K562 (cell line): ENCODE measurements at regions of chr2 and their contacts with region 1.

Region 1: GRCh38 chr2:155377266-155377680 is 678.8 kb downstream of the KCNJ3 start:
- DNase-seq: peak in 2 of 4 experiments; percentile 15 to 25
- ATAC-seq: peak; percentile 75
- H3K4me3 ChIP-seq: no peak overlapping the region
- H3K27ac ChIP-seq: no peak overlapping the region
- H3K4me1 ChIP-seq: no peaks in the 10 kb centered on the region
- H3K27me3 ChIP-seq: no peaks in the 10 kb centered on the region
- CTCF ChIP-seq: peak in 2 of 3 experiments; percentile 19 to 45; a peak in 2 of 6 replicates
- EP300 ChIP-seq: no peak
- POLR2A ChIP-seq: no peak
- RAD21 ChIP-seq: peak; percentile 58 to 76

Region 2: DNA sequence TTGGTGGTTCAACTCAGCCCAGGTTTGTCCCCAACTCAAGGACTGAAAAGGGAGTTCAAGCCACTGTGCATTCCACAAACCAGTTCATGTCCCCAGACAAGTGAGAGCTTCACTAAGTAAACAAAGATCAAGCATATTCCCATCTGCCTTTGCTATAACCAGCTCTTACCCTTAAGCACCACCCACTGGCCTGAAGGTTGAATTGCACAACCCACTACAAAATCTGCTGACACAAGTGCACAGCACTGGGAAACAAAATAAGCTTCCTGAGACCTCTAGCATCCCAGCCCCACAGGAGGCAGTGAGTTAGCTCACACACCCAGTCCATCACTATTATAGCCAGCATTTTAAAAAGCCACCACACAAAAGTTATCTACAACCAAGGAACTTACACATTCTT is 438.6 kb after region 1 on chr2:
- CTCF ChIA-PET with region 1: no interaction called
- POLR2A ChIA-PET with region 1: no interaction called
- in situ Hi-C with region 1: no loop called
- intact Hi-C with region 1: loop called (anchors 5 kb)
- DNase-seq: peak; percentile 8 to 11 (median 10)
- ATAC-seq: peak; percentile 65
- H3K4me3 ChIP-seq: no peak overlapping the region
- H3K27ac ChIP-seq: no peak overlapping the region
- H3K4me1 ChIP-seq: no peaks in the 10 kb centered on the region
- H3K27me3 ChIP-seq: no peaks in the 10 kb centered on the region
- CTCF ChIP-seq: peak in 2 of 3 experiments; percentile 27 to 33; a peak in 2 of 6 replicates
- EP300 ChIP-seq: no peak
- POLR2A ChIP-seq: no peak
- RAD21 ChIP-seq: peak in 1 of 2 experiments; percentile 52; a peak in 2 of 4 replicates

Region 3: DNA sequence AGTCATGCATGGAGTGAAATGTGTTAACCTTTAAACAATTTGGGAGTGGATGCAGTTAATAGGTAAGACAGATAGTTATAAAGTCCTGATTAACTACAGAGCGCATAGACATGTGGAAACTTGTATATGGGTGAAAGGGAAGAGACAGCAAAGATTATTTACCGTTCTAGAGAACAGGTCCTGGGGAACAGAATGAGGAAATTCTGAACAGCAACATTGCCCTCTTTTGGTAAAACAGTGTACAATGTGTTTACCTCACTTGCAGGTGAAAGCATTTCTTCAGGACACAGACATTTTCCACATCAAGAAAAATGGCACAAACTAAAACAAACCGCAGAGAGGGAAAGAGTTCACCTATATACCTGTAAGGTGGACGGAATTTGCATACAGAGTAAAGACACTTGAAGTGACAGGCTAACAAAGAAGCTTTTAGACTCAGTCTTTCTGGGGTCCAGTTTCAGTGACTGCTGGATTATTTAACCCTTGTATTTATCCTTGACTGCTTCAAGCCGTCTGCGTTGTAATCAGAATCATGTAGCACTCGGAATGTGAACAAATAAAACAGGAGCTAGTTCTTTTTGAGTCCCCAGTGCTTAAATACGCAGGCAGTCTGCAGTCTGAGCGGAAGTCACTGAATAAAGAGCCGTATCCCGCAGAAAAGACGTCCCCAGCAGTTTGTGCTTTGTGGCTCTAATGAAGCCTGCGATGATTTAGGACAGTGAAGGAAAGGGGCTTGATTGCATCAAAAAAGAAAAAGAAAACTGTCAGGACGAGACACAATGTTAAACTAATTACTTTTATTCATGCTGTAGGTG is 1515.4 kb after region 1 on chr2:
- CTCF ChIA-PET with region 1: interaction called, 3 read pairs
- POLR2A ChIA-PET with region 1: no interaction called
- in situ Hi-C with region 1: no loop called
- intact Hi-C with region 1: loop called (anchors 5 kb)
- DNase-seq: peak in 2 of 4 experiments; percentile 35 to 53
- ATAC-seq: peak; percentile 95
- H3K4me3 ChIP-seq: peak overlapping the region; percentile 16
- H3K27ac ChIP-seq: no peak overlapping the region
- H3K4me1 ChIP-seq: no peaks in the 10 kb centered on the region
- H3K27me3 ChIP-seq: no peaks in the 10 kb centered on the region
- CTCF ChIP-seq: peak; percentile 29 to 64 (median 61); a peak in 5 of 6 replicates
- EP300 ChIP-seq: no peak
- POLR2A ChIP-seq: no peak
- RAD21 ChIP-seq: peak; percentile 83 to 87

Region 4: GRCh38 chr2:157055660-157056199 is 1678.5 kb after region 1 on chr2:
- CTCF ChIA-PET with region 1: no interaction called
- POLR2A ChIA-PET with region 1: no interaction called
- in situ Hi-C with region 1: no loop called
- intact Hi-C with region 1: loop called (anchors 5 kb)
- DNase-seq: peak in 2 of 4 experiments; percentile 9 to 29
- ATAC-seq: 0 out of 3 replicates have a peak, but pooled peaks have one; percentile 57
- H3K4me3 ChIP-seq: no peak overlapping the region
- H3K27ac ChIP-seq: no peak overlapping the region
- H3K4me1 ChIP-seq: no peaks in the 10 kb centered on the region
- H3K27me3 ChIP-seq: no peaks in the 10 kb centered on the region
- CTCF ChIP-seq: peak in 2 of 3 experiments; percentile 14 to 64; a peak in 3 of 6 replicates
- EP300 ChIP-seq: no peak
- POLR2A ChIP-seq: no peak
- RAD21 ChIP-seq: peak; percentile 45 to 72